ENCODE measurements at regions of chr7 and their contacts with region 1.

Region 1: DNA sequence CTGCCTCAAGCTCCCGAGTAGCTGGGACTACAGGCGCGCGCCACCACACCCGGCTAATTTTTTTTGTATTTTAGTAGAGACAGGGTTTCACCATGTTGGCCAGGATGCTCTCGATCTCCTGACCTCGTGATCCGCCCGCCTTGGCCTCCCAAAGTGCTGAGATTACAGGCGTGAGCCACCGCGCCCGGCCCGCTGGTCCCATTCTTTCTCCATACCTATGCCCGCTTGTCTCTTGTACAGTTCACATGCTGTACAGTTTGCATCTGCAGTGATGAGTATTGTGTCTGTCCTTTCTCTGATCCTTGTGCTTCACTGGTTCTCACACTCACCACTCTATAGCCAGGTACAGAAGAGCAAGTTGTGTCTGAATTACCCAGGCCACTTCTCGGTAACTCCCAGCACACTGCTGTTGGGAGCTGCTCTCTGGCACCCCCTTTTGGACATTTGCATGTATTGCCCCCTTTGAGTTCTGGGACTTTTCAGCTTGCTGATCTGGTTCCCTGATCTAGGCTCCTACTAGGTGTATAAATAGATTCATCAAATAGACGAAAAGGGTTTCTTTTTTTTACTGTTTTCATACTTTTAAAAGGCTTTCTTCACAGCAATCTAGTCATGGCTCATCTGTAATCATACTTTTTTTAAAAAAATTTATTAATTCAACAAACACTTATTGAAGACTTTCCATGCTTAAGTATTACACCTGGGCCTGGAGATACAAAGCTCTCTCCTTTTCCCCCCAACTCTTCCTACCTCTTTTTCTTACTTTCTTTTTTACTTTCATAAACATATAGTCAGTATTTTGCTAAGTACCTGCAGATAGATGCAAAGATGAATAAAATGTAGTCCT is 53.5 kb downstream of the AOAH start:
- DNase-seq: peak; percentile 54
- H3K4me3 Mint-ChIP-seq: no peak overlapping the region
- H3K27ac Mint-ChIP-seq: no peak overlapping the region
- H3K4me1 Mint-ChIP-seq: peaks cover 55% of the 10 kb centered on the region
- H3K27me3 Mint-ChIP-seq: no peaks in the 10 kb centered on the region

Region 2: GRCh38 chr7:36440880-36441279 is 229.9 kb before region 1 on chr7:
- intact Hi-C with region 1: loop called (anchors 1 kb)
- DNase-seq: no peak
- H3K4me3 Mint-ChIP-seq: no peak overlapping the region
- H3K27ac Mint-ChIP-seq: no peak overlapping the region
- H3K4me1 Mint-ChIP-seq: no peaks in the 10 kb centered on the region
- H3K27me3 Mint-ChIP-seq: no peaks in the 10 kb centered on the region

Region 3: DNA sequence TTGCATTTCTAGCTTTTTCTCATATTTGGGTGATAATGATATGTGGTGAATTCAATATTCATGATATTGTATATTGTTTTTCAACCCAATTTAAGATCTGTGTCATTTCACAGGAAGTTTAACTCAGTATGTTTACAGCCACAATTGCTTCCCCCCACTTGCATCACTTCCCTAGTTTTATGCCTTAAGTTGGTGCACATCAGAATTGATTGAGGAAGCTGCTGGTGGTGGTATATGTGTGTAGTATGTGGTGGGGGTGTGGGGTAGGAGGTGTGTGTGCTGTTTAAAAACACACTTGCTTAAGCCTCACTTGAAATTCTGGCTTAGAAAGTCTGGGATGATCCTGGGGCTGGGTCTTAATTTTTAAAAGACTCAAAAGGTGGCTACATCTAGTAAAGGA is 298.6 kb after region 1 on chr7:
- intact Hi-C with region 1: no loop called
- DNase-seq: peak; percentile 10
- H3K4me3 Mint-ChIP-seq: no peak overlapping the region
- H3K27ac Mint-ChIP-seq: peak overlapping the region; percentile 56
- H3K4me1 Mint-ChIP-seq: peaks cover 41% of the 10 kb centered on the region
- H3K27me3 Mint-ChIP-seq: no peaks in the 10 kb centered on the region

Measured in activated T-helper 1 cell treated with anti-CD3 and anti-CD28 coated beads, Interleukin-12 subunit alpha, Interleukin-12 subunit beta, Interleukin-2, Interleukin-4 antibody, amounts not matched to agents 30 ng/mL and 10 ng/mL and 1 ng/mL, durations not matched to agents 14 hours and 24 hours and 36 hours (primary cell).